CD4-positive, alpha-beta T cell (primary cell): ENCODE measurements at regions of chr22 and their contacts with region 1.

Region 1: DNA sequence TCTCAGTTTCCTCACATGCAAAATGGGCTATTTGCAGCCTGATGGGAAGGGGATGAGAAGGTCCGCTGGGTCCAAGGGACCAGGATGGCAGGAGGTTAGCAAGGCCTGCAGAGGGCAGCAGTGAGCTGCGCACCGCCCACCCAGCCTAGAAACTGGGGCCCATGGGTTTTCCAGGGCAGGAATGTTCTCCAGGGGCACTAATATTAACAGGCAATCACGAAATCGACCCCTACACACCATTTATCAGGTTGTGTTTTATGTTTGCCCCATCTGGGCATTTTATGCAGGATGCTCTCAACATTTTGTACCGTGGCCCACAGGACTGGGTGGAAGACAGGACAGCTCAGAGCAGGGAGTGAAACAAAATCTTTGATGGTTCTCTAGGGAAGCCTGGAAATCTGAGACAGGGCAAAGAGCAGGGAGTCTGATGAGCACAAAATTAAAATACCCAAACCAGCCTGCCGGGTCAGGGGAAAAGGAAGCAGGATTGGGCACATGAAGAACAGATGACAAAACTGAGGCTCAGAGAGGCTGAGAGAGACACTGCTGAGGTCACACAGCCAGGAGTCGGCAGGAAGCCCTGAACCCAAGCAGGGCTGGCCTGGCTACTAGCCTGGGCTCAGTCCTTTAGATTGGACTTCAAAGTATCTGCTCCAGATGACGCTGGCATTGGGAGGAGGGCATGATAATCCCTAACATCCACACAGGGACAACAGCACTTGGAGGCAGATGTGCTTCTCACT is 1.6 kb upstream of the BCR start:
- DNase-seq: peak; percentile 33 to 82 (median 58)
- ATAC-seq: peak; percentile 18
- H3K4me3 ChIP-seq: no peak overlapping the region
- H3K4me3 Mint-ChIP-seq: peak overlapping the region; percentile 89
- H3K27ac ChIP-seq: no peak overlapping the region
- H3K27ac Mint-ChIP-seq: peak overlapping the region; percentile 83
- H3K4me1 ChIP-seq: peaks cover 78% of the 10 kb centered on the region
- H3K4me1 Mint-ChIP-seq: peaks cover 44% of the 10 kb centered on the region
- H3K27me3 ChIP-seq: no peaks in the 10 kb centered on the region
- H3K27me3 Mint-ChIP-seq: no peaks in the 10 kb centered on the region
- CTCF ChIP-seq: peak; percentile 97

Region 2: DNA sequence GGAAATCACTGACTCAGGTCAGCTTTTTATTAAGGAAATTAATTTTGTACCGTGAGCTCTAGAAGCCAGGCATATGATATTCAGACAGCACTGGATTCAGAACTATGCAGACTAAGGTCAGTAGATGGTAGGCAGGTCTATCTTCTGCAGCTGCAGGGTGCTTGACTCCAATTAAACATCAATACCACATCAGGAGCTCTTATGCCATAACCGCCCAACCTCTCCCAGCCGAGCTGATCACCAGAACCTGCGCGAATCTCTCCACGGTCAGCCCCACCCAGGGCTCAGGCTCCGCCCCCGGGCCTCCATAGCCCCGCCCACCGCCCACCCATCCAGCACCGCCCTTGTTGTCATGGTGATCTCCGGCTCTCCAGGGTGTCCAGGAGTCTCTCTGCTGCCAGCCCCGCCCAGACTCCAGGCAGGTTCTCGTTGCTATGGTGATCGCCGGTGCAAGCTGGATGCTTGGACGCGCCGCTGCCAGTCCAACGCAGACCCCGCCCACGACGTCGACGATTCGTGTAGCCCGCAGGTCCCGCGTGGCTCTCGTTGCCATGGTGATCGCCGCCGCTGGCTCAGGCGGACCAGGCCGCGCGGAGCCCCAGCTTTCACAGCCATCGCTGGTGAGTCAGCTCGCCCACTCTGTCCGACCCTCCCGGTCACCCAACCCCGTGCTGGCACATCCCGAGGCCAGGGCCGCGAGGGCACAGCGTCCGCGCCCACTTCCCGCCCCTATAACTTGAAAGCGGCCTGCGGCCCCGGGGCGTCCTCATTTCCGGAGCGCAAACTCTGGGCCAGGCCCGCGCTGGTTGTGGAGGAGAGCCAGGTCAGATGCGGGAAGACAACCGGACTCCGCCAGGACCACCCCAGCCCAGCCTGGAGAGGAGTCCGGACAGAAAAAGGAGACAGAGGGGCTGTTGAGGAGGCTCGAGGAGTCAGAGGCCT is 33.5 kb before region 1 on chr22 and contains the start of gene RAB36:
- CTCF ChIA-PET with region 1: interaction called, 8 read pairs
- POLR2A ChIA-PET with region 1: interaction called, 5 read pairs
- intact Hi-C with region 1: loop called (anchors 2 to 5 kb)
- DNase-seq: peak; percentile 70 to 99 (median 90)
- ATAC-seq: peak; percentile 52
- H3K4me3 ChIP-seq: peak within 1 kb of the TSS; percentile 50
- H3K4me3 Mint-ChIP-seq: peak within 1 kb of the TSS; percentile 89
- H3K27ac ChIP-seq: peak within 1 kb of the TSS; percentile 54 to 78
- H3K27ac Mint-ChIP-seq: peak within 1 kb of the TSS; percentile 94
- H3K4me1 ChIP-seq: peaks cover 57% of the 10 kb centered on the region
- H3K4me1 Mint-ChIP-seq: peaks cover 50% of the 10 kb centered on the region
- H3K27me3 ChIP-seq: no peaks in the 10 kb centered on the region
- H3K27me3 Mint-ChIP-seq: no peaks in the 10 kb centered on the region
- CTCF ChIP-seq: no peak
- total RNA-seq, gene RAB36: 0.77 to 0.87 TPM

Region 3: GRCh38 chr22:23199159-23199558 is 20.5 kb after region 1 on chr22:
- CTCF ChIA-PET with region 1: no interaction called
- POLR2A ChIA-PET with region 1: no interaction called
- intact Hi-C with region 1: no loop called
- DNase-seq: no peak
- ATAC-seq: no peak
- H3K4me3 ChIP-seq: no peak overlapping the region
- H3K4me3 Mint-ChIP-seq: no peak overlapping the region
- H3K27ac ChIP-seq: no peak overlapping the region
- H3K27ac Mint-ChIP-seq: peak overlapping the region; percentile 47
- H3K4me1 ChIP-seq: peaks cover 29% of the 10 kb centered on the region
- H3K4me1 Mint-ChIP-seq: peaks cover 45% of the 10 kb centered on the region
- H3K27me3 ChIP-seq: no peaks in the 10 kb centered on the region
- H3K27me3 Mint-ChIP-seq: no peaks in the 10 kb centered on the region
- CTCF ChIP-seq: no peak

Region 4: DNA sequence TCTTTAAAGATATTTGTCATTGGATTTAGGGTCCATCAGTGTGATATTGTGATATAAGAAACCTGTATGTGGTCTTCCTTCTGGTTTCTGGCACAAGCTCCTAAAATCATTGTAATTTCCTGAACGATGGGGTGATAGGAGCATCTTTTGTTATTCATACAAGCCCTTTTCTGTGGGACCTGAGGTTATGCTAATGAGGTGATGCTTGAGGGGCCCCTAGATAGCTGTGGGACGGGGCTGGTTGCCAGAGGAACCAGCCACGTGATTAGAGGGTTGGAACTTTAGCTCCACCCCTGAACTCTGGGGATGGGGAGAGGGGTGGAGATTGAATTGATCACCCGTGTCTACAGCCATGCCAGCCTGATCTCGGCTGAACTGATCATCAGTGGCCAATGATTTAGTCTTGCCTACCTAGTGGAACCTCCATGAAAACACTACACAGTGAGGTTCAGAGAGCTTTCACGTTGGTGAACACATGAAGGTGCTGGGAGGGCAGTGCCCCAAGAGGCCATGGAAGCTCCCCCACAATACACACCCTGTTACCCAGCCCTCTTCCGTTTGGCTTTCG is 64.4 kb after region 1 on chr22:
- CTCF ChIA-PET with region 1: interaction called, 5 read pairs
- POLR2A ChIA-PET with region 1: interaction called, 11 read pairs
- intact Hi-C with region 1: loop called (anchors 1 to 2 kb)
- DNase-seq: peak; percentile 45 to 90 (median 64)
- ATAC-seq: peak; percentile 94
- H3K4me3 ChIP-seq: peak overlapping the region; percentile 34
- H3K4me3 Mint-ChIP-seq: peak overlapping the region; percentile 70
- H3K27ac ChIP-seq: peak overlapping the region; percentile 48 to 78
- H3K27ac Mint-ChIP-seq: peak overlapping the region; percentile 91
- H3K4me1 ChIP-seq: peaks cover 91% of the 10 kb centered on the region
- H3K4me1 Mint-ChIP-seq: peaks cover 88% of the 10 kb centered on the region
- H3K27me3 ChIP-seq: no peaks in the 10 kb centered on the region
- H3K27me3 Mint-ChIP-seq: no peaks in the 10 kb centered on the region
- CTCF ChIP-seq: no peak

Region 5: GRCh38 chr22:23289851-23290724 is 111.4 kb after region 1 on chr22:
- CTCF ChIA-PET with region 1: interaction called, 15 read pairs
- POLR2A ChIA-PET with region 1: interaction called, 4 read pairs
- intact Hi-C with region 1: loop called in 1 of 2 experiments (anchors 2 kb)
- DNase-seq: peak; percentile 40 to 74 (median 52)
- ATAC-seq: peak; percentile 71
- H3K4me3 ChIP-seq: no peak overlapping the region
- H3K4me3 Mint-ChIP-seq: no peak overlapping the region
- H3K27ac ChIP-seq: no peak overlapping the region
- H3K27ac Mint-ChIP-seq: no peak overlapping the region
- H3K4me1 ChIP-seq: no peaks in the 10 kb centered on the region
- H3K4me1 Mint-ChIP-seq: no peaks in the 10 kb centered on the region
- H3K27me3 ChIP-seq: no peaks in the 10 kb centered on the region
- H3K27me3 Mint-ChIP-seq: no peaks in the 10 kb centered on the region
- CTCF ChIP-seq: peak; percentile 78

Region 6: DNA sequence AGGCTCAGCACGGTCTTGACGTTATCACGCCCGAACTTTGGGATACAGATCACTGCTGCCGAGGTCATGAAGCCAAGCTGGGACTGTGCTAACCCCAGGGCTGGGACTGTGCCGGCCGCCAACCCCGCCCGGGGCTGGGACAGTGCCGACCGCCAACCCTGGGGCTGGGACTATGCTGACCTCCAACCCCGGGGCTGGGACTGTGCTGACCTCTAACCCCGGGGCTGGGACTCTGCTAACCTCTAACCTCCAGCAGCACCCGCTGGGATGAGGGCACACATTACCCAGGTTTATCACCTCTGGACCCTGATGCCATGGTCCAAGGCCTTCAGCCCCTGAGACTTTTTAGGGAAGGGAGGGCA is 271.7 kb after region 1 on chr22:
- CTCF ChIA-PET with region 1: no interaction called
- POLR2A ChIA-PET with region 1: no interaction called
- intact Hi-C with region 1: no loop called
- DNase-seq: no peak
- ATAC-seq: no peak
- H3K4me3 ChIP-seq: no peak overlapping the region
- H3K4me3 Mint-ChIP-seq: no peak overlapping the region
- H3K27ac ChIP-seq: no peak overlapping the region
- H3K27ac Mint-ChIP-seq: no peak overlapping the region
- H3K4me1 ChIP-seq: no peaks in the 10 kb centered on the region
- H3K4me1 Mint-ChIP-seq: no peaks in the 10 kb centered on the region
- H3K27me3 ChIP-seq: no peaks in the 10 kb centered on the region
- H3K27me3 Mint-ChIP-seq: peaks cover 13% of the 10 kb centered on the region
- CTCF ChIP-seq: no peak

Region 7: GRCh38 chr22:23539135-23539838 is 360.6 kb after region 1 on chr22:
- CTCF ChIA-PET with region 1: no interaction called
- POLR2A ChIA-PET with region 1: no interaction called
- intact Hi-C with region 1: loop called in 1 of 2 experiments (anchors 5 kb)
- DNase-seq: peak; percentile 59 to 88 (median 66)
- ATAC-seq: peak; percentile 100
- H3K4me3 ChIP-seq: no peak overlapping the region
- H3K4me3 Mint-ChIP-seq: peak overlapping the region; percentile 20
- H3K27ac ChIP-seq: no peak overlapping the region
- H3K27ac Mint-ChIP-seq: no peak overlapping the region
- H3K4me1 ChIP-seq: peaks cover 6% of the 10 kb centered on the region
- H3K4me1 Mint-ChIP-seq: peaks cover 10% of the 10 kb centered on the region
- H3K27me3 ChIP-seq: no peaks in the 10 kb centered on the region
- H3K27me3 Mint-ChIP-seq: no peaks in the 10 kb centered on the region
- CTCF ChIP-seq: peak; percentile 81